ENCODE measurements at regions of chr2 and their contacts with region 1.

Region 1: GRCh38 chr2:41782306-41783158 is 265.3 kb upstream of the PKDCC start:
- DNase-seq: no peak
- ATAC-seq: peak in 1 of 2 donors; percentile 28
- H3K4me3 ChIP-seq: no peak overlapping the region
- H3K27ac ChIP-seq: no peak overlapping the region
- H3K4me1 ChIP-seq: no peaks in the 10 kb centered on the region
- H3K27me3 ChIP-seq: no peaks in the 10 kb centered on the region

Region 2: GRCh38 chr2:41400088-41400665 is 382.4 kb before region 1 on chr2:
- intact Hi-C with region 1: loop called in 1 of 4 experiments (anchors 10 kb)
- DNase-seq: no peak
- ATAC-seq: no peak
- H3K4me3 ChIP-seq: no peak overlapping the region
- H3K27ac ChIP-seq: no peak overlapping the region
- H3K4me1 ChIP-seq: no peaks in the 10 kb centered on the region
- H3K27me3 ChIP-seq: no peaks in the 10 kb centered on the region

Region 3: GRCh38 chr2:41598161-41598894 is 184.2 kb before region 1 on chr2:
- intact Hi-C with region 1: no loop called
- DNase-seq: peak in 2 of 3 donors; percentile 39 to 65
- ATAC-seq: peak; percentile 91
- H3K4me3 ChIP-seq: no peak overlapping the region
- H3K27ac ChIP-seq: peak overlapping the region; percentile 95
- H3K4me1 ChIP-seq: peaks cover 2% of the 10 kb centered on the region
- H3K27me3 ChIP-seq: no peaks in the 10 kb centered on the region

Region 4: GRCh38 chr2:41803361-41803760 is 20.8 kb after region 1 on chr2:
- intact Hi-C with region 1: no loop called
- DNase-seq: no peak
- ATAC-seq: no peak
- H3K4me3 ChIP-seq: no peak overlapping the region
- H3K27ac ChIP-seq: no peak overlapping the region
- H3K4me1 ChIP-seq: no peaks in the 10 kb centered on the region
- H3K27me3 ChIP-seq: no peaks in the 10 kb centered on the region

Region 5: DNA sequence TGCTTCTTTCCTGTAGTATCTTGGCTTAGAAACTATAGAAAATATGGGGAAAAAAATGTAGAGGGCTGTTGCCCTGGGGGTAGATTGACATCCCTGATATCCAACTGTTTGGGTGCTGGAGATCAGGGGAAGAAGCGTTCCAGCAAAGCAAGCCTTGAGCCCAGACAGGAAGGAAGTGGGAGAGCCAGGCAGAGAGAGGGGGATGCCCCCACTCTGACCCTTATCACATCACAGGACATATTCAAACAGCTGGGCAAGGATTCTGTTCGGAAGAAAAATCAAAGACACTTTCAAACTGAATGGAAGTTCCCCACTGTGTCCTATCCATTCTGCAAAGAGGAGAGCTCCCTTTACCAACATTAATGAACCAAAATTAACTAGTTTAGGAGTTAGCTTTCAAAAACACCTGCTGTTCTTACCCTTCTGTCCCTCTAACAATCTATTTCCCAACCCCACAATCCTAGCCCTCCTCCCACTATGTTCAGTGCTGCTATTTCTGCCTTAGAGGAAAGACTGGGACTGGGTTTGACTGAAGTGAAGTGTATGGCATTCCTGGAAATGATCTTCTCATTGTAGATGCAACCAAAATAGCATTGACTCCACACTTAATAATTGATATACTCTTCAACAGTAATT is 728.2 kb after region 1 on chr2:
- intact Hi-C with region 1: no loop called
- DNase-seq: no peak
- ATAC-seq: no peak
- H3K4me3 ChIP-seq: no peak overlapping the region
- H3K27ac ChIP-seq: no peak overlapping the region
- H3K4me1 ChIP-seq: no peaks in the 10 kb centered on the region
- H3K27me3 ChIP-seq: no peaks in the 10 kb centered on the region